ENCODE measurements at regions of chr2 and their contacts with region 1.

Region 1: GRCh38 chr2:85852937-85853498 is 35.8 kb downstream of the ST3GAL5 start:
- DNase-seq: peak; percentile 77
- H3K4me3 Mint-ChIP-seq: peak overlapping the region; percentile 80
- H3K27ac Mint-ChIP-seq: peak overlapping the region; percentile 100
- H3K4me1 Mint-ChIP-seq: peaks cover 75% of the 10 kb centered on the region
- H3K27me3 Mint-ChIP-seq: no peaks in the 10 kb centered on the region

Region 2: GRCh38 chr2:85813982-85814801 is 38.8 kb before region 1 on chr2:
- CTCF ChIA-PET with region 1: no interaction called
- DNase-seq: peak; percentile 92
- H3K4me3 Mint-ChIP-seq: no peak overlapping the region
- H3K27ac Mint-ChIP-seq: no peak overlapping the region
- H3K4me1 Mint-ChIP-seq: no peaks in the 10 kb centered on the region
- H3K27me3 Mint-ChIP-seq: peaks cover 51% of the 10 kb centered on the region

Region 3: DNA sequence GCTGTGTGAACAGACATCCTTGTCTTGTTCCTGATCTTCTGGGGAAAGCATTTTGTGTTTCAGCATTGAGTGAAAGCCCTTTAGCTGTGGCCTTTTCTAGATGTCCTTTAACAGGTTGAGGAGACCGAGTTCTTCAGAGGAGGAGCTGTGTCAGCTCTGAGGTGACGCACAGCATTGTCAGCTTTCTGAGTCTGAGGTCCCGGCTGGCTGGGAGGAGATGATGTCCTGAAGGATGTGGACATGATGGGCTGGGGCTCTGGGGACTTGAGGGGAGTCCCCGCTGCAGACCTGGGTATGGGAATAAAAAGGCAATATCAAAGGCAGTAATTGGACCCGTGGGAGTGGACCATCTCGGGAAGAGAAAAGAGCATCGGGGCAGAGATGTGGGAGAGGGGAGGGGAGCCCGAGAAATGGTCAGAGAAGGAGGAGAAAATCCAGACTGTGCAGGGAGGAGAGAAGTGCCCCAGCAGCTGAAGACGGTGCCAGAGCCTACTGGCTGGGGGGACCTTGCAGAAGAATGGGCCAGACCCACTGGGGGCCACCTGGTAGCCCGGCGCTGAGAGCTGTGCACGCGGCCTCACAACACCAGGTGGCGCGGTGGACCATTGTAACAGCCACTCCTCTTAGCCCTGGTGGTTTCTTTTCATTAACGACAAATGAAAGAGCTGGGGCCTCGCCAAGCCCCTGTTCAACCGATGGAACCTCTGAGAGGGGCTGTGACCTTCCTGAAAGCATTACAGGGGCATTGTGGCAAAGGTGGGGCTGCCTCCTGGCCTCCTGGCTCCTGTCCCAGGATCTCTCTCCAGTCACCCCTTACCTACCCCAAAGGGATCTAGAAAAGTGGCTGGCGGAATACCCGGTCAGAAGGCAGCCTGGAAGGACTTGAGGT is 25.8 kb before region 1 on chr2:
- CTCF ChIA-PET with region 1: interaction called, 22 read pairs
- DNase-seq: peak; percentile 88
- H3K4me3 Mint-ChIP-seq: no peak overlapping the region
- H3K27ac Mint-ChIP-seq: no peak overlapping the region
- H3K4me1 Mint-ChIP-seq: peaks cover 33% of the 10 kb centered on the region
- H3K27me3 Mint-ChIP-seq: peaks cover 31% of the 10 kb centered on the region

Measured in activated naive CD4-positive, alpha-beta T cell treated with anti-CD3 and anti-CD28 coated beads, Interleukin-2, amount 10 ng/mL, durations not matched to agents 7 days and 5 days (primary cell).